Activated T-helper 2 cell treated with anti-CD3 and anti-CD28 coated beads, Interferon-gamma antibody, Interleukin-2, Interleukin-4, amounts not matched to agents 10 μg/mL and 5 μg/mL and 100 μg/mL, durations not matched to agents 14 hours and 24 hours and 36 hours (primary cell): ENCODE measurements at regions of chr2 and their contacts with region 1.

Region 1: GRCh38 chr2:126776692-126777619 is 121.0 kb downstream of the GYPC start:
- DNase-seq: peak; percentile 71
- H3K4me3 Mint-ChIP-seq: peak overlapping the region; percentile 87
- H3K27ac Mint-ChIP-seq: peak overlapping the region; percentile 47
- H3K4me1 Mint-ChIP-seq: peaks cover 6% of the 10 kb centered on the region
- H3K27me3 Mint-ChIP-seq: peaks cover 24% of the 10 kb centered on the region

Region 2: GRCh38 chr2:126244937-126245336 is 532.0 kb before region 1 on chr2:
- intact Hi-C with region 1: loop called (anchors 5 kb)
- DNase-seq: peak; percentile 15
- H3K4me3 Mint-ChIP-seq: no peak overlapping the region
- H3K27ac Mint-ChIP-seq: no peak overlapping the region
- H3K4me1 Mint-ChIP-seq: no peaks in the 10 kb centered on the region
- H3K27me3 Mint-ChIP-seq: no peaks in the 10 kb centered on the region

Region 3: DNA sequence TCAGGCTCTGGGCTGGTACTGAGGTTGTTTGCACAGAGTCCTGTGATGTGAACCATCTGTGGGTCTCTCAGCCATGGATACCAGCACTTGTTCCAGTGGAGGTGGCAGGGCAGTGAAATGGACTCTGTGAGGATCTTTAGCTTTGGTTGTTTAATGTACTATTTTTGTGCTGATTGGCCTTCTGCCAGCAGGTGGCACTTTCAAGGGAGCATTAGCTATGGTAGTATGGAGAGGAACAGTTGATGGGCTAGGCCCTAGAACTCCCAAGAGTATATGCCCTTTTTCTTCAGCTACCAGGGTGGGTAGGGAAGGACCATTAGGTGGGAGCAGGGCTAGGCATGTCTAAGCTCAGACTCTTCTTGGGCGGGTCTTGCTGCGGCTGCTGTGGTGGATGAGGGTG is 378.0 kb before region 1 on chr2:
- intact Hi-C with region 1: loop called (anchors 1 kb)
- DNase-seq: no peak
- H3K4me3 Mint-ChIP-seq: no peak overlapping the region
- H3K27ac Mint-ChIP-seq: no peak overlapping the region
- H3K4me1 Mint-ChIP-seq: no peaks in the 10 kb centered on the region
- H3K27me3 Mint-ChIP-seq: no peaks in the 10 kb centered on the region

Region 4: DNA sequence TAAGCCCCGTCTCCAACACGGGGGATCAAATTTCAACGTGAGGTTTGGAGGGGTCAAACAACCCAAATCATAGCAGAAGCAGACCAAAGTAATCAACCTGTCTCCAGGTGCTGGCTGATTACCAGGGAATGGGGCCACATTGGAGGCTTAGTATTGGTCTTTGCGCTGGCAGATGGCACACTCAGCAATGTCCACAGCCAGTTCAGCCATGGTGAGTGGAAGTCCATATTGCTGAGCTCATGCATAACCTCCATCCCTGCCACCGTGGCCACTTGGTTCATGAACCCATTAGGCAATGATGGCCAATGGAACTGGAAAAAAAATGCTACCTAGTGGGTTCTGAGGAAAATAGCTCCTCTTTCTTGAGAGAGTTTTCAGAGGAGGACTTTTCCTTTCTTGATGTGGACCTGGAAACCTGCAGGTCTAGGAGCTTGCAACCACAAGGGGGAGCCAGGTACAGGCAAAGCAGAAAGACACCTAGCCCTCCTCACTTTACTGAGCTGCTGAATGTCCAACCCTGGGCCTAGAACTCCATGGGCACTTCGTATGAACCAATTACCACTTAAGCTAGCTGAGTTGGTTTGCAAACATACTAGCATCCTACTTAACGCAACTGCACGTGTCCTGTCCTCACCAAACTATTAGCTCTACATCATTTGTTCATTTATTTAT is 249.0 kb before region 1 on chr2:
- intact Hi-C with region 1: loop called (anchors 1 kb)
- DNase-seq: peak; percentile 34
- H3K4me3 Mint-ChIP-seq: no peak overlapping the region
- H3K27ac Mint-ChIP-seq: no peak overlapping the region
- H3K4me1 Mint-ChIP-seq: no peaks in the 10 kb centered on the region
- H3K27me3 Mint-ChIP-seq: peaks cover 2% of the 10 kb centered on the region

Region 5: DNA sequence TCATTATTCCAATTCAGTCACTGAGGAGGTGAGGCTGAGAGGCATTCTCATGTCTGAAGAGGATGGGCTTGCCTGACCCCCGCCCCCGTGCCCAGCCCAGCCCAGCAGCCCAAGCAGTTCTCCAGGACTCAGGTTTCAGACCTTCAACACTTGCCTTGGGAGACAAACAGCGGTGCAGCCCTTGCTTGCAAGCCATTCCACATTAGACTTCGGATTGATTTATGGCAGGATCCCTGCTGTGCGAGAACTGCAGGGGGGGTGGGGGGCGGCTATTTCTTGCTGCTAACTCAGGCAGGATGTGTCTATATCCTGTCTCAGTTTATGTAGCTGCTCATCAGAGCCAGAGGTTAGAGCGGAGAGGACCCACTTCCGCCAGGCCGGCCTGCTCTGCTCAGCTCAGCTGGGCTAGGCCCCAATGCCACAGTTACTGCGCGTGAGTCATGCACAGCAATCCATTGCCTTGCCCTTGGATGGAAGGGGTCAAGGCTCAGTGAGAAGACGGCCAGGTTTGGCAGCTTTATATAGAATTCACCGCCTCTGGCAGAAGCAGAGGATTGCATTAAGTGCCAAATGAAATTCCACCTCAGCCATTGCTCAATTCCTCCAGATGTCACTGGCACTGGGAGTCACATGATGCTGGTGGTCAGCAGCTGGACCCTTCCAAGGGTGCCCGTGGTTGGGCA is 119.2 kb before region 1 on chr2:
- intact Hi-C with region 1: loop called (anchors 2 kb)
- DNase-seq: peak; percentile 72
- H3K4me3 Mint-ChIP-seq: peak overlapping the region; percentile 93
- H3K27ac Mint-ChIP-seq: peak overlapping the region; percentile 97
- H3K4me1 Mint-ChIP-seq: peaks cover 61% of the 10 kb centered on the region
- H3K27me3 Mint-ChIP-seq: no peaks in the 10 kb centered on the region

Region 6: GRCh38 chr2:126761981-126762878 is 14.7 kb before region 1 on chr2:
- intact Hi-C with region 1: loop called (anchors 1 kb)
- DNase-seq: peak; percentile 31
- H3K4me3 Mint-ChIP-seq: peak overlapping the region; percentile 32
- H3K27ac Mint-ChIP-seq: no peak overlapping the region
- H3K4me1 Mint-ChIP-seq: peaks cover 28% of the 10 kb centered on the region
- H3K27me3 Mint-ChIP-seq: peaks cover 24% of the 10 kb centered on the region